Ascending aorta (tissue), 2 donors: ENCODE measurements at regions of chr20 and their contacts with region 1.

Region 1: GRCh38 chr20:45095753-45096371 is 5.1 kb downstream of the KCNS1 start:
- DNase-seq: no peak
- H3K4me3 ChIP-seq: no peak overlapping the region
- H3K27ac ChIP-seq: no peak overlapping the region
- H3K4me1 ChIP-seq: no peaks in the 10 kb centered on the region
- H3K27me3 ChIP-seq: no peaks in the 10 kb centered on the region
- CTCF ChIP-seq: peak; percentile 32 to 76 (median 57)

Region 2: DNA sequence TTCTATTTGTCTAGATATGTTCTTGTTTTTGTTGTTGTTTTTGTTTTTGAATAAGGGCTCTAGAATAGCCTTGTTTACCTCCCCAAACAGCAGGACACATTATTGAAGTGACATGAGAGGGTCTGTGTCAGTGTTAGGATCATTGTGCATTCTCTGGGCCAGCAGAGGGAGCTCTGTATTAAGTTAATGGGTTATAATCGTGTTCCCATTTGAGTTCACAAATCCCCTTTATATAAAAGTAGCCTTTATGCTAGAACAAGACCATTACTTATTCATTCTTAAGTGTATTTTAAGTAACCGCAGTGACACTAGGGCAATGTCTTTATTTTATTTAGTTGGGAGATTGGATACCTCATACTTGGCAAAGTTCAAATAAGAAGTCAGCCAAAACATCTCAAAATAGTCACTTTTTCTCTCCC is 84.7 kb before region 1 on chr20:
- intact Hi-C with region 1: loop called (anchors 1 kb)
- DNase-seq: peak in 1 of 2 donors; percentile 71
- H3K4me3 ChIP-seq: no peak overlapping the region
- H3K27ac ChIP-seq: no peak overlapping the region
- H3K4me1 ChIP-seq: no peaks in the 10 kb centered on the region
- H3K27me3 ChIP-seq: no peaks in the 10 kb centered on the region
- CTCF ChIP-seq: peak; percentile 27 to 69 (median 32)

Region 3: DNA sequence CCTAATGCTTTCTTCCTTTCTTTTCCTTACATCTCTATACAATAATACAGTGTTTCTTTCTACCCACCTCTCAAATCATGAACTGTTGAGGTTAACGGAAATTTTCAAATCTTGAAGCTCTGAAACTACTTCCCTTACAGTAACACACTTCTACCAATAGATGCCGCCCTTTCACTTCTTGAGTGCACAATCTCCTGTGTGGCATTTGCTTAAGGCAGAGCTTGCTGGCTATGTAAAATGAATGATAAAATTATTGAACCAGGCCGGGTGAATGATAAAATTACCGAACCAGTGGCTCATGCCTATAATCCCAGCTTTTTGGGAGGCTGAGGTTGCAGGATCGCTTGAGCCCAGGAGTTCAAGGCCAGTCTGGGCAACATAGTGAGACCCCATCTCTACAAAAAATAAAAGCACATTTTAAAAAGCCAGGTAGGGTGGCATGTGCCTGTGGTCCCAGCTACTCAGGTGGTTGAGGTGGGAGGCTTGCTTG is 51.7 kb before region 1 on chr20:
- intact Hi-C with region 1: loop called (anchors 2 kb)
- DNase-seq: no peak
- H3K4me3 ChIP-seq: no peak overlapping the region
- H3K27ac ChIP-seq: no peak overlapping the region
- H3K4me1 ChIP-seq: no peaks in the 10 kb centered on the region
- H3K27me3 ChIP-seq: no peaks in the 10 kb centered on the region
- CTCF ChIP-seq: peak; percentile 33 to 90 (median 82)

Region 4: DNA sequence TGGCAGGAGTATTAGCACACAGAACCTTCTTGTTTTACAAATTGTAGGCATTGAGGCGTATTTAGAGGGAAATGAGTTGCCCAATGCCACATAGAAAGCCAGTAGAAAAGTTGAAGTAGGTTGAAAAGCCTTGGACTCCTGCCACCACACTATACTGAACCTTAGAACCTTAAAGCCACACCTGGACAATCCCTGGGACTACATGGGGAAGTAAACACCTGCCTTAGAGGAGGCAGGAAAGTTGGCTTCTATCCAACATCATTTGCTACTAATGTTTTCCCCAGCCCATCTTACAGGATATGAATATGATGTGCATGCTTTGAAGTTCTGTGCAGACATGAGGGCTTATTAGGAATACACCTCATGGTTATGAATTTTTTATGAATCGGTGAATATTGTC is 456.6 kb after region 1 on chr20:
- intact Hi-C with region 1: no loop called
- DNase-seq: no peak
- H3K4me3 ChIP-seq: no peak overlapping the region
- H3K27ac ChIP-seq: no peak overlapping the region
- H3K4me1 ChIP-seq: no peaks in the 10 kb centered on the region
- H3K27me3 ChIP-seq: no peaks in the 10 kb centered on the region
- CTCF ChIP-seq: no peak